A673 (cell line): ENCODE measurements at regions of chr2 and their contacts with region 1.

Region 1: DNA sequence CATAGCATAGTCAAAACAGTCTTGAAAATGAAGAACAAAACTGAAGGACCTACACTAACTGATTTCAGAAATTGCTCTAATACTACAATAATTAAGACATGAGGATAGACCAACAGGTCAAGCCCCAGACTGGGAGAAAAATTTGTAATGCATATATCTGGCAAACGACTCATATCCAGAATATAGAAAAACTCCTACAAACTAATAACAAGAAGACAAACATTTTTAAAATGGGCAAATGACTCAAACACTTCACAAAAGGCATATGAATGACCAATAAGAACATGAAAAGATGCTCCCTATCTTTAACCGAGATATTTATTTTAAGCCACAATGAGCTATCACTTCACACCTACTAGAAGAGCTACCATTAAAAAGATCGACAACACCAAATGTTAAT is 14.2 kb downstream of the TGFBRAP1 start:
- DNase-seq: no peak
- H3K4me3 ChIP-seq: no peak overlapping the region
- H3K27ac ChIP-seq: no peak overlapping the region
- H3K4me1 ChIP-seq: no peaks in the 10 kb centered on the region
- H3K27me3 ChIP-seq: no peaks in the 10 kb centered on the region
- CTCF ChIP-seq: no peak

Region 2: DNA sequence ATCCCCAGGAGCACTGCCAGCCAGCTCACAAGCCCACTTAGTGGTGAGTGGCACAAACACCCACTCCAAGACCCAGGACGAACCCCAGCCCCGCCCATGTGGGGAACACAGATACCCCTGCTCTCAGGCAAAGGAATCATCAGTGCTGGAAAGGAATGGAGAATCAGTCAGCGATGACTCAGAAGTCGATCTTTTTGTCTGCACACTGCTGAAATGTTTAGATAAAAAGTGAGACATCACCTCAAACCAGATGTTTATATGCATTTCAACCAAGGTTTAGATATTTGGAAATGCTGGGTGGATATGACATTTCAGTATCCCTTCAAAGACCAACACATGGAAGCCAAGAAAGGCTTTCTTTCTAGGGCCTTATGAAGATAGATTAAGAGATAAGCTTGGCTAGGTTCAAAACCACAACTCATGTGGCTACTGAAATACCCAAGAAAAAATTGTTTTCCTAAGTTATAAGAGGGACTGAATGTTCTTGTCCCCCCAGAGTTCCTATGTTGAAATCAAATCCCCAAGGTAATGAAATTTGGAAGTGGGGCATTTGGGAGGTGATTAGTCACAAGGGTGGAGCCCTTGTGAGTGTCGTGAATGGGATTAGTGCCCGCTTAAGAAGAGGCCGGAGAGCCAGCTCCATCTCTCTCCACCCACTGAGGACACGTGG is 417.7 kb before region 1 on chr2:
- CTCF ChIA-PET with region 1: no interaction called
- POLR2A ChIA-PET with region 1: no interaction called
- intact Hi-C with region 1: no loop called
- DNase-seq: no peak
- H3K4me3 ChIP-seq: no peak overlapping the region
- H3K27ac ChIP-seq: no peak overlapping the region
- H3K4me1 ChIP-seq: no peaks in the 10 kb centered on the region
- H3K27me3 ChIP-seq: no peaks in the 10 kb centered on the region
- CTCF ChIP-seq: no peak

Region 3: DNA sequence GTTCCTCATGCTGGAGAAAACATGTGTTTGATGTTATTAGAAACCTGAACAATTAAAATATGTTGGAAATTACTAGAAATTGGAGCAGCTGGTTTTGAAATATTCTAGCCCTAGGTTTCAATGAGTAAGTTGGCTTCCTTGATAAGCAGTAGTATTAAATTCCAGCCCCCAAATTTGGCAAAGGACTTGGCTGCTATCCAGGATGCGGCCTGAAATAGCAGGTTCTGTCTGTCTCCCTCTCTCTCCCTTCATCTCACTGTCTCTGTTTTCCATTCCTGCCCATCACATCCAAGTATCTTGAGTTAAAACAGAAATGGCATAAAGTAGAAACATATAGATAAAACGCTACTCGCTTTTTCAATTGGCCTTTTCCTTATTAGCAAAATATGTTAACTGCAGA is 94.7 kb before region 1 on chr2:
- CTCF ChIA-PET with region 1: no interaction called
- POLR2A ChIA-PET with region 1: interaction called, 12 read pairs
- intact Hi-C with region 1: no loop called
- DNase-seq: no peak
- H3K4me3 ChIP-seq: no peak overlapping the region
- H3K27ac ChIP-seq: no peak overlapping the region
- H3K4me1 ChIP-seq: no peaks in the 10 kb centered on the region
- H3K27me3 ChIP-seq: peaks cover 5% of the 10 kb centered on the region
- CTCF ChIP-seq: no peak

Region 4: DNA sequence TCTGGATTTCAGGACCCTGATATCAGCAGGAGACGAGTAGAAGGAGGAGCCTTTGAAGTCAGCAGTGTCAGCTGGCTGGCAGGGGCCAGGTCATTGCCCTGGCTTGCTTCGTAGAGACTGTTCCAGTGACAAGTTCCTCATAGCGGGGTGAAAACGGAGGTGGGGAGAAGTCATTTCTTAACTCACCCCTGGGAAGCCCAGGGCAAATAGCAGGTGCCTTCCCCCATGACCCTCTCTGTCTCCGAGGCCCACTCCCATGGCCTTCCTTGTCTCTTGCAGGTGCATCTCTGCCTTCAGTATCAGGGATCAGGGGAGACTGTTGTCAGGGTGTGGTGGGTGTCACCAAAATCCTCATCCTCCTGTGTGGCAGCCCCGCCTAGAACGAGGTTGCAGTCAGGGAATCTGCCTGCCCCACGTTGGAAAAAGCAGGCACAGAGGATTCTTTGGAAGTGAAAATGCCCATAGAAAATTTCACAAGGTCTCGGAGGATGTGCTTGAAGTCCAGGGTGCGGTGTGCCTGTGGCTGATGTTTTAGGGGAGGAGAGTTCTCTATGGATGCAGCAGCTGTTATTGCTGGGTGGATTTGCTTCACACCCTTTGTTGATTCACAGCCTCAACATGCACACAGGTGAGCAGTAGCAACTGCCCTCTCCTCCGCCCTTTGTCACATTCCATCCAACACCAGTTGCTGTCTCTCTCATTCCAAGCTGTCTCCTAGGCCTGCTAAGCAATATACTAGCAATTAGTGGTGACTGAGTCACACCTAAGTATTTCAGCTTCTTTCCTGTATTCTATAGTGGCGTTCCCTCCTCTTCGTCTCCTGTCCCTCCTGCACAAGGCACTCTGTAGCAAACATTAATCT is 226.1 kb after region 1 on chr2:
- CTCF ChIA-PET with region 1: no interaction called
- POLR2A ChIA-PET with region 1: no interaction called
- intact Hi-C with region 1: no loop called
- DNase-seq: no peak
- H3K4me3 ChIP-seq: no peak overlapping the region
- H3K27ac ChIP-seq: no peak overlapping the region
- H3K4me1 ChIP-seq: no peaks in the 10 kb centered on the region
- H3K27me3 ChIP-seq: no peaks in the 10 kb centered on the region
- CTCF ChIP-seq: no peak